ENCODE measurements at regions of chr1 and their contacts with region 1.

Region 1: GRCh38 chr1:92298573-92299476 is at the starts of genes GLMN and RPAP2:
- DNase-seq: peak; percentile 77 to 88 (median 84)
- H3K4me3 ChIP-seq: peak within 1 kb of the TSS; percentile 66
- H3K27ac ChIP-seq: peak within 1 kb of the TSS; percentile 79 to 90
- H3K4me1 ChIP-seq: peaks cover 5% of the 10 kb centered on the region
- H3K27me3 ChIP-seq: no peaks in the 10 kb centered on the region
- CTCF ChIP-seq: no peak
- EP300 ChIP-seq: no peak
- POLR2A ChIP-seq: peak; percentile 61
- total RNA-seq, gene GLMN: 4.7 to 14.6 (median 10.5) TPM
- total RNA-seq, gene RPAP2: 6.3 to 46.4 (median 38.0) TPM

Region 2: GRCh38 chr1:91924146-91924545 is 374.7 kb before region 1 on chr1:
- intact Hi-C with region 1: loop called in 1 of 4 experiments (anchors 10 kb)
- DNase-seq: no peak
- H3K4me3 ChIP-seq: no peak overlapping the region
- H3K27ac ChIP-seq: no peak overlapping the region
- H3K4me1 ChIP-seq: no peaks in the 10 kb centered on the region
- H3K27me3 ChIP-seq: no peaks in the 10 kb centered on the region
- CTCF ChIP-seq: no peak
- EP300 ChIP-seq: no peak
- POLR2A ChIP-seq: no peak